Natural killer cell (primary cell): ENCODE measurements at regions of chr2 and their contacts with region 1.

Region 1: DNA sequence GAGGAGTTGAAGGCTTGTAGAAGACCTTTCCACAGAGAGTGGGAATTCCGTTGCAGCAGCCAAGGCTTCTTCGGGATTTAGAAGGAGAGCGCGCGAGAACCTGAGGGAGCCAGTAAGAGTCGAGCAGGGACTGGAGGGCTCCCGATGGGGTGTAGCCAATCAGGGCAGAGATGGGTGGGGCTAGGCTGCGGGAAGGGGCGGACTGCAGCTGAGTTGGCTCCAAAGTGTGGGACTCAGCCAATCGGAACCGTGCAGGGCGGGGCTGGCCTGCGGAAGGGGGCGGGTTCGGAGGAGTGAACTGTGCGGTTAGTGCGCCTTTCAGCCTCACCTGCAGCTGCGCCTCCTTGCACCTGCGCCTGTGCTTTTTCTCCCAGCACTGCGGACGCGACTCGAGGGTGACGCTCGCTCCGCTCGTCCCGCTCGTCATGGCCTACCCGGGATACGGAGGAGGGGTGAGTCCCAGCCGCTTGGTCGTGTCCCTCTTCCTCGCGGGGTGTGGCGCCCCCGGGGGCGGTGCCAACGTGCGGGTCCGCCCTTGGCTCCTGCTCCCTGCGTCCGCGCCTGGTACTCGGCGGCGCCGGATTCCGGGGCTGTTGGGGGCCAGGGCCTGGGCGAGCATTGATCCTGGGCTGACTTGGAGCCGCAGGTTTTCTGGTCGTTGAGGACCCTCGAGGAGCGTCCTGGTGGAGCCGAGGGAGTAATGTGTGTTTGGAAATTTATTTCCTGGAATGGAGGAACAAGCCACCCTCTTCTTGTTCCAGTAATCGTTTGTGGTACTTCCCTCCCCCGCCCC is at the start of gene GCA:
- DNase-seq: peak; percentile 94 to 98
- ATAC-seq: peak; percentile 98 to 100 (median 99)
- H3K4me3 ChIP-seq: peak within 1 kb of the TSS; percentile 71
- H3K4me3 Mint-ChIP-seq: peak within 1 kb of the TSS; percentile 92
- H3K27ac ChIP-seq: peak within 1 kb of the TSS; percentile 41
- H3K27ac Mint-ChIP-seq: peak within 1 kb of the TSS in 1 of 2 donors; percentile 92
- H3K4me1 ChIP-seq: peaks cover 11% of the 10 kb centered on the region
- H3K4me1 Mint-ChIP-seq: peaks cover 10 to 13% of the 10 kb centered on the region in 2 donors
- H3K27me3 ChIP-seq: no peaks in the 10 kb centered on the region
- H3K27me3 Mint-ChIP-seq: peaks cover 3 to 7% of the 10 kb centered on the region in 2 donors
- CTCF ChIP-seq: no peak
- total RNA-seq, gene GCA: 5.5 to 9.7 (median 6.6) TPM

Region 2: DNA sequence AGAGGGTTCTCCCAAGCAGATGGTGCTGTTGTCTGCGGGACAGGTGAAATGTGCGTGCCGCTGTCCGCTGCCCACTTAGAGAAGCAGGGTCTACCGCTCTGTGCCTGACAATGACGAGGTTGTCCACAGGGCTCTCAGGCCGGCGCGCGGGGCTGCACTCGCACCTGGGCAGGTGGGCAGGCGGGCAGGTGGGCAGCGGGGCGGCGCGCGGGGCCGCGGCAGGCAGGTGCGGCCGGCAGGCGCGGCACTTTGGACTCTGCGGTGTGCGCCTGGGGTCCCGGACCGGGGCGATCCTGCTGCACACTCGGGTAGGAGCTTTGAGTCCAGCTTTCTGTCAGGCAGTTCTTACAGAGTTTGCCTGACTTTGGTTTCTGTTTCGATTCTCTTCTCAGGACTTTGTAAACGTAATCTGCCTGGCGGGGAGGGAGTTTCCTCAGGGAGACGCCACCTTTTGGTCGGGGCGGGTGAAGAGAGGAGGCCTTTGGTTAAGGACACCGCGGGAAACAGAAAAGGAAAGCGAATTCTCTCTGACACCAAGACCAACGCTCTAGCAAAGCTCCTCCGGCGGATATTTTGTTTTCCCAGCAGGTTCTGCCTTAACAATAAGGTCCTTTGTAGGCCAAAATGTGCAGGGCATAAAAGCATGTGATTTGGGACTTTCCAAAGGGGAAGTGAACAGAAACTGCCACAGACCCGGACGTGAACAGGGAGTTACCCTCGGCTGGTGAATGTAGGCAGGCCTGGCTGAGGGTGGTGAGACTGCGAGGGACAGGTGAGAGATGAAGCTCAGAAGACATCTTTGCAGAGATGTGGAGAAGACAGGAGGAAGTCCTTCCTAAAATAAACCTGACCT is 25.5 kb before region 1 on chr2 and contains the start of gene IFIH1:
- intact Hi-C with region 1: loop called (anchors 1 kb)
- DNase-seq: peak; percentile 71 to 93
- ATAC-seq: peak; percentile 85 to 93 (median 89)
- H3K4me3 ChIP-seq: peak within 1 kb of the TSS; percentile 76
- H3K4me3 Mint-ChIP-seq: peak within 1 kb of the TSS; percentile 94
- H3K27ac ChIP-seq: peak within 1 kb of the TSS; percentile 90
- H3K27ac Mint-ChIP-seq: peak within 1 kb of the TSS; percentile 98 to 99
- H3K4me1 ChIP-seq: peaks cover 15% of the 10 kb centered on the region
- H3K4me1 Mint-ChIP-seq: peaks cover 52 to 58% of the 10 kb centered on the region in 2 donors
- H3K27me3 ChIP-seq: no peaks in the 10 kb centered on the region
- H3K27me3 Mint-ChIP-seq: no peaks in the 10 kb centered on the region
- CTCF ChIP-seq: no peak
- total RNA-seq, gene IFIH1: 36.7 to 57.4 (median 36.9) TPM